MCF 10A (cell line): ENCODE measurements at regions of chr1 and their contacts with region 1.

Region 1: GRCh38 chr1:151993654-151994496 is at the start of gene S100A10:
- DNase-seq: peak; percentile 86
- H3K4me3 Mint-ChIP-seq: peak within 1 kb of the TSS; percentile 89
- H3K27ac Mint-ChIP-seq: peak within 1 kb of the TSS; percentile 96
- H3K4me1 Mint-ChIP-seq: peaks cover 54% of the 10 kb centered on the region
- H3K27me3 Mint-ChIP-seq: no peaks in the 10 kb centered on the region
- CTCF ChIP-seq: no peak
- total RNA-seq, gene S100A10: 1,693 and 1,694 TPM in 2 replicates

Region 2: DNA sequence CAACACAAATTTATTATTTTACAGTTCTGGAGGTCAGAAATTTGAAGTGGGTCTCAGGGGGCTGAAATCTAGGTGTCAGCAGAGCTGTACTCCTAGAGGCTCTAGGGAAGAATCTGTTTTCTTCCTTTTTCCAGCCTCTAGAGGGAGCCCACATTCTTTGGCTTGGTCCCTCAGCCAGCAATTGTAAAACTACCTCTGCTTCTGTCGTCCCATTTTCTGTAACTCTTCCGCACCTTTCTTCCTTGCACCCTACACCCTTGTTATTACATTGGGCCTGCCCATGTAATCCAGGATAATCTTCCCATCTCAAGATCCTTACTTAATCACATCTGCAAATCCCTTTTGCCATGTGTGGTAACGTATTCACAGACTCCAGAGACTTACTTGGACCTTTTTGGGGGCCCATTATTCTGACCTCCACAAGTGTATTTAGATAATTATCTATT is 59.8 kb before region 1 on chr1:
- CTCF ChIA-PET with region 1: interaction called, 350 read pairs
- POLR2A ChIA-PET with region 1: interaction called, 453 read pairs
- intact Hi-C with region 1: loop called (anchors 1 kb)
- DNase-seq: peak; percentile 82
- H3K4me3 Mint-ChIP-seq: no peak overlapping the region
- H3K27ac Mint-ChIP-seq: no peak overlapping the region
- H3K4me1 Mint-ChIP-seq: peaks cover 11% of the 10 kb centered on the region
- H3K27me3 Mint-ChIP-seq: no peaks in the 10 kb centered on the region
- CTCF ChIP-seq: peak; percentile 96

Region 3: GRCh38 chr1:151945725-151946364 is 48.0 kb before region 1 on chr1:
- CTCF ChIA-PET with region 1: interaction called, 350 read pairs
- POLR2A ChIA-PET with region 1: interaction called, 453 read pairs
- intact Hi-C with region 1: loop called (anchors 1 kb)
- DNase-seq: peak; percentile 100
- H3K4me3 Mint-ChIP-seq: peak overlapping the region; percentile 16
- H3K27ac Mint-ChIP-seq: peak overlapping the region; percentile 99
- H3K4me1 Mint-ChIP-seq: peaks cover 33% of the 10 kb centered on the region
- H3K27me3 Mint-ChIP-seq: no peaks in the 10 kb centered on the region
- CTCF ChIP-seq: no peak

Region 4: DNA sequence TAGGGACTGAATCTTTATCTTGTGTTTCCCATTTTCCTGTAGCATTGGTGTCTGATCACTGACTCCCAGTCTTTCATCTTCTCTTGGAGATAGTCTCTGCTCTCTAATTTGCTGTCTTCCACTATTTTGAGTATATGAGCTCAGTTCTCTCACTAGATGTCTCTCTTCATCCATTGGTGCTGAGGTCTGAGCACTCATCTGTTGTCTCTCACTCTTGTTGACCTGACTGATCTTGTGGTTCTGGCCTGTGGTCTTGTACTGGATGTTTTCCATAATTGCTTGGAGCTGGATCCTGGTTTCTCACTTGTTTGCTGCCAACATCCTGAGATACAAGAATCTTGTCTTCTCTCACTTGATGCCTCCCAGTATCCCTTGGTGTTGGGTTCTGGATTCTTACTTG is 68.1 kb after region 1 on chr1:
- CTCF ChIA-PET with region 1: no interaction called
- POLR2A ChIA-PET with region 1: no interaction called
- intact Hi-C with region 1: no loop called
- DNase-seq: no peak
- H3K4me3 Mint-ChIP-seq: no peak overlapping the region
- H3K27ac Mint-ChIP-seq: no peak overlapping the region
- H3K4me1 Mint-ChIP-seq: no peaks in the 10 kb centered on the region
- H3K27me3 Mint-ChIP-seq: peaks cover 17% of the 10 kb centered on the region
- CTCF ChIP-seq: no peak

Region 5: DNA sequence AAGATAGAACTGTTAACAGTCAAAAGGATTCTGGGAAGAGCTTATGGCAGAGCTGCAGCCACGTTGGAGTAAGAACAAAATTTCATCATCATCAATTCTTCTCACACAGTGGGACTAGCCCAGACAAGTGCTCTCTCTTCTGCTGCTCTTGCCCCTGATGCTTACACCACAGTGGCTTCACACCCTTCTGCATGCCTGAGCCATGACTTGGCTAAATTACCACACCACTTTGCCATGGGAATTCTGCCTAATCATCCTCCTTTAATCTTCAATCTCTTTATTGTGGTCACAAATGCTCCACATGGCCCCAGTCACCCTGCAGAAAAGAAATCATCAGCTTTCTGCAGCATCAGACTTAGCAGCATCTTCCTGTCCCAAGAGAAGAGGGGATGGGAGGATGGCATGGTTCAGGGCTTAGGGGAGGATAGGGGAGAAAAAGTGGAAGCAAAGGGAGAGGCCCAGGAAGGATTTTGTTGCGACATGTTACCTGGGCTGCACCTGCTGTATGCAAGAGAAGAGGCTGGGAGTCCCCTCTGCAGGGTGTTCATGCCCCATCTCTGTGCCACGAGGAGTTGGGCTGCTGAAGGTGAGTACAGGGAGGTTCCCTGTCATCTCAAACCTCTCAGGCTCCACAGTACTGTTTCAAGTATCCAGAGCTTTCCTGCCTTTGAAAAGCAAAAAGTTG is 174.1 kb after region 1 on chr1:
- CTCF ChIA-PET with region 1: no interaction called
- POLR2A ChIA-PET with region 1: interaction called, 18 read pairs
- intact Hi-C with region 1: no loop called
- DNase-seq: peak; percentile 100
- H3K4me3 Mint-ChIP-seq: peak overlapping the region; percentile 49
- H3K27ac Mint-ChIP-seq: peak overlapping the region; percentile 99
- H3K4me1 Mint-ChIP-seq: peaks cover 70% of the 10 kb centered on the region
- H3K27me3 Mint-ChIP-seq: no peaks in the 10 kb centered on the region
- CTCF ChIP-seq: no peak